Heart left ventricle (tissue), 16 donors: ENCODE measurements at regions of chr12 and their contacts with region 1.

Region 1: GRCh38 chr12:53321074-53321814 is at the start of gene AAAS:
- DNase-seq: peak; percentile 96 to 98 (median 97)
- ATAC-seq: peak; percentile 91 to 94 (median 93)
- H3K4me3 ChIP-seq: peak within 1 kb of the TSS; percentile 41 to 97 (median 78)
- H3K27ac ChIP-seq: peak within 1 kb of the TSS; percentile 86 to 96 (median 92)
- H3K4me1 ChIP-seq: peaks cover 0 to 44% (median 32%) of the 10 kb centered on the region in 12 donors
- H3K27me3 ChIP-seq: no peaks in the 10 kb centered on the region
- CTCF ChIP-seq: peak; percentile 98 to 100 (median 100)
- POLR2A ChIP-seq: peak in 1 of 2 donors; percentile 71
- total RNA-seq, gene AAAS: 26.7 to 44.5 (median 37.1) TPM

Region 2: GRCh38 chr12:52741392-52742195 is 579.6 kb before region 1 on chr12:
- intact Hi-C with region 1: no loop called
- DNase-seq: peak in 3 of 5 donors; percentile 45 to 56 (median 55)
- ATAC-seq: peak in 2 of 4 donors; percentile 53 to 71
- H3K4me3 ChIP-seq: no peak overlapping the region
- H3K27ac ChIP-seq: no peak overlapping the region
- H3K4me1 ChIP-seq: no peaks in the 10 kb centered on the region
- H3K27me3 ChIP-seq: peaks cover 0 to 28% (median 0%) of the 10 kb centered on the region in 9 donors
- CTCF ChIP-seq: no peak
- POLR2A ChIP-seq: no peak

Region 3: GRCh38 chr12:53046655-53047220 is 274.5 kb before region 1 on chr12:
- intact Hi-C with region 1: no loop called
- DNase-seq: peak; percentile 88 to 94 (median 91)
- ATAC-seq: peak; percentile 17 to 55 (median 42)
- H3K4me3 ChIP-seq: peak overlapping the region; percentile 57 to 84 (median 75)
- H3K27ac ChIP-seq: peak overlapping the region; percentile 96 to 100 (median 98)
- H3K4me1 ChIP-seq: peaks cover 7 to 81% (median 61%) of the 10 kb centered on the region in 12 donors
- H3K27me3 ChIP-seq: no peaks in the 10 kb centered on the region
- CTCF ChIP-seq: no peak
- POLR2A ChIP-seq: peak; percentile 82 to 97

Region 4: DNA sequence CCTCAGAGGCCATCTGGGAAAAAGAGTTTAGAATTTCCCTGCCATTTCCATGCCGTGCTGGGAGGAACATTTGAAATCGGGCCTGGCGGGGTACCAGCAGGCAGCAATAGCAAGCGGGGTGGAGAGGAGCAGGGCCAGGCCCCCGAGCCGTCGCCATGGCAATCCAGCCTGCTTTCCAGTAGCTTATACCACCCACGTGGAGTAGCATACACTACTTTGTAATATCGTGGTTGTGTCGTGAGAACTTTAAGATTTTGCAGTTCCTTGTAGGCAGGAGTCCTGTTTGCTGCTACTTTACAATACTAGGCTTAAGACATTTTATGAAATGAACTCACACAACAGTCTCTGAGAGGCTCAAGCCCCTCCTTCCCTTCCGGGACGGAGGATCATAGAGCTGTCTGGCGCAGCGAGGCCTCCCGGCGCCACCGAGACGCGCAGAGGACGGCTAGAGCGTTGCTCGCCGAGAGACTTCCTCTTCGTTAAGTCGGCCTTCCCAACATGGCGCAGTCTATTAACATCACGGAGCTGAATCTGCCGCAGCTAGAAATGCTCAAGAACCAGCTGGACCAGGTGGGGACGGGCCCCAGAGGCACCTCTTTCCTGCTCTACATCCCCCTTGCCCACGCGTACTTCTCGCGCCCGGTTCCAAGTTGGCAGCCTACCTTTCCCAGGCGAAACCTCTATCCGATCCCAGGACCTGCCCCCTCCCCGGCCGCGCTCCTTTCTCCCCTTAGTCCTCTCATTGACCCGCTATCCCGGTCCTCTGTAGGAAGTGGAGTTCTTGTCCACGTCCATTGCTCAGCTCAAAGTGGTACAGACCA is 26.0 kb before region 1 on chr12 and contains the start of gene PFDN5:
- intact Hi-C with region 1: loop called in 1 of 10 experiments (anchors 1 kb)
- DNase-seq: peak; percentile 90 to 95 (median 93)
- ATAC-seq: peak; percentile 87 to 95 (median 92)
- H3K4me3 ChIP-seq: peak within 1 kb of the TSS; percentile 71 to 95 (median 86)
- H3K27ac ChIP-seq: peak within 1 kb of the TSS; percentile 60 to 96 (median 87)
- H3K4me1 ChIP-seq: peaks cover 0 to 52% (median 29%) of the 10 kb centered on the region in 12 donors
- H3K27me3 ChIP-seq: no peaks in the 10 kb centered on the region
- CTCF ChIP-seq: peak in 3 of 12 donors; percentile 7 to 24 (median 21)
- POLR2A ChIP-seq: peak in 1 of 2 donors; percentile 49
- total RNA-seq, gene PFDN5: 289 to 380 (median 358) TPM

Region 5: DNA sequence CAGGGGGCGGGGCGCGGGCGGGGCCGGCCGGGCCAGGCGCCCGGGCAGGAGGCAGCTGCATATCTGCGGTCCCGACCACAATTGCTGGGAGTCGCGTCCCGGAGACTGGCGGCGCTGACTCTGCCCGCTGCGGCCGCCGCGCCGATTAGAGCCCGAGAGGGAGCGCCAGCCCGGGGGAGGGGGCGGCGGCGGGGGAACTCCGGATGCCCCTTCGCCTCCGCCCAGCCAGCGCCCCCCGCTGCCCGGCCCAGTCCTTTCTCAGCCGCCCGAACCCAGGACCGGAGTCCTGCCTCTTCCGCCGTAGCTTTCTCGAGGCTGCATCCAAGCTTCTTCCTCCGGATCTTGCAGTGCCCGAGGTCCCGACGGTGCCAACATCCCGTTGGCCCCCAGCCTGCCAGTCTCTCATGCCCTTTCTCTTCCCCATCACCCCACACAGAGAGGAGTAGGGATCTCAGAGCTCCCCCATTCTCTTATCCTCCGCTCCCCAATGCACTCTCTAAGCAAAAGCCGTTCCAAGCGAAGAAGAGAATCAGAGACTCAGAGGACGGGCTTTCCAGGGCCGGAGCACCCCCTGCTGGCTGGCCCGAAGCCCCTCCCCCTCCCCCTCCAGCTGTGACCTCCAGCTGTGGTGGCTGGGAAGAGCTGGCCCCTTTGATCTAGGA is 23.7 kb after region 1 on chr12:
- intact Hi-C with region 1: loop called in 8 of 10 experiments (anchors 1 to 2 kb)
- DNase-seq: peak; percentile 78 to 88 (median 84)
- ATAC-seq: peak; percentile 90 to 94 (median 94)
- H3K4me3 ChIP-seq: peak overlapping the region; percentile 40 to 88 (median 76)
- H3K27ac ChIP-seq: peak overlapping the region; percentile 62 to 92 (median 86)
- H3K4me1 ChIP-seq: peaks cover 0 to 23% (median 12%) of the 10 kb centered on the region in 12 donors
- H3K27me3 ChIP-seq: peaks cover 0 to under 1% (median 0%) of the 10 kb centered on the region in 9 donors
- CTCF ChIP-seq: peak; percentile 55 to 88 (median 78)
- POLR2A ChIP-seq: peak in 1 of 2 donors; percentile 55

Region 6: DNA sequence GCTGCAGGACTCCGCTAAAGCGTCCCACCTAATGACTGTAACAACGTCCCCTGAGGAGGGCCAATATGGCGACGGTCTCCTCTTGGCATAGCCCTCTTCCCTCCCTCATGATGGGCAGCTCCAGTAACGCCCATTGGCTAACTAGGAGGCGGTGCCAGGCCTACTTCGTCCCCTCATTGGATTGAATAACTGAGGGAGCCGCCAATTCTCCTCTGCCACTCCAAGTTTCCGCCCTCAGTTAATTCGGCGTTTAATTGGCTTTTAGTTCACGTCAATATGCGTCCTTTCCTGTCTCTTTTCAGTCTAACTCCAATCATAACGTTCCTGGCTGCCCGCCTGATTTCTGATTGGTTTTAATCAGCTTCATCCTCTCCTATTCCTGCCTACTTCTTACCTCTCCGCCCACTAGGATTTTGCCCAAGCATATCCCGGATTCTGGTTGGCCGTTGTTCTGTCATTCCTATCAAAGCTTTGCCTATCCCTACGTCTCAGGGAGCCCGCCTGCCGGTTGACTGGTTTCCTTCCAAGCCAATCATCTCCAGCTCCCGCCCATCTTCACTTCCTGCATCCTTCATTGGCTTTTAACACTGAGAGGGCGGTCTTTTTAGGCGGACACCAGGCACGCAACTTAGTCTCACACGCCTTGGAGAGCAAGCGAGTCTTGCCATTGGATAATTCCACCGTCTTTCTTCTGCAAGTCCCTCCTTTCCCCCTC is 58.3 kb after region 1 on chr12:
- intact Hi-C with region 1: loop called in 2 of 10 experiments (anchors 2 kb)
- DNase-seq: peak; percentile 95 to 100 (median 99)
- ATAC-seq: peak; percentile 87 to 91 (median 90)
- H3K4me3 ChIP-seq: peak overlapping the region; percentile 27 to 85 (median 64)
- H3K27ac ChIP-seq: peak overlapping the region; percentile 90 to 100 (median 98)
- H3K4me1 ChIP-seq: peaks cover 22 to 46% (median 42%) of the 10 kb centered on the region in 12 donors
- H3K27me3 ChIP-seq: no peaks in the 10 kb centered on the region
- CTCF ChIP-seq: no peak
- POLR2A ChIP-seq: peak; percentile 43 to 89

Region 7: GRCh38 chr12:53492830-53493611 is 171.8 kb after region 1 on chr12:
- intact Hi-C with region 1: no loop called
- DNase-seq: peak; percentile 94
- ATAC-seq: peak; percentile 89 to 97 (median 95)
- H3K4me3 ChIP-seq: peak overlapping the region; percentile 13 to 71 (median 62)
- H3K27ac ChIP-seq: peak overlapping the region; percentile 52 to 87 (median 78)
- H3K4me1 ChIP-seq: peaks cover 0 to 39% (median 24%) of the 10 kb centered on the region in 12 donors
- H3K27me3 ChIP-seq: no peaks in the 10 kb centered on the region
- CTCF ChIP-seq: peak in 2 of 12 donors; percentile 32 to 41
- POLR2A ChIP-seq: peak in 1 of 2 donors; percentile 53

Region 8: GRCh38 chr12:53508534-53509199 is 187.4 kb after region 1 on chr12:
- intact Hi-C with region 1: loop called in 8 of 10 experiments (anchors 2 to 10 kb)
- DNase-seq: peak; percentile 83 to 88 (median 86)
- ATAC-seq: peak; percentile 75 to 90 (median 86)
- H3K4me3 ChIP-seq: no peak overlapping the region
- H3K27ac ChIP-seq: peak overlapping the region in 10 of 12 donors; percentile 9 to 74 (median 50)
- H3K4me1 ChIP-seq: peaks cover 0 to 17% (median 9%) of the 10 kb centered on the region in 12 donors
- H3K27me3 ChIP-seq: no peaks in the 10 kb centered on the region
- CTCF ChIP-seq: peak; percentile 81 to 95 (median 90)
- POLR2A ChIP-seq: peak in 1 of 2 donors; percentile 13